Dendritic cell treated with granulocyte-macrophage colony-stimulating factor and Interleukin-4, amounts not matched to agents 40 ng/mL and 50 ng/mL, for 4 days (primary cell): ENCODE measurements at regions of chr10 and their contacts with region 1.

Region 1: GRCh38 chr10:90462749-90463470 is 394.9 kb downstream of the HTR7 start:
- H3K4me3 Mint-ChIP-seq: no peak overlapping the region
- H3K27ac Mint-ChIP-seq: no peak overlapping the region
- H3K4me1 Mint-ChIP-seq: no peaks in the 10 kb centered on the region
- H3K27me3 Mint-ChIP-seq: no peaks in the 10 kb centered on the region

Region 2: DNA sequence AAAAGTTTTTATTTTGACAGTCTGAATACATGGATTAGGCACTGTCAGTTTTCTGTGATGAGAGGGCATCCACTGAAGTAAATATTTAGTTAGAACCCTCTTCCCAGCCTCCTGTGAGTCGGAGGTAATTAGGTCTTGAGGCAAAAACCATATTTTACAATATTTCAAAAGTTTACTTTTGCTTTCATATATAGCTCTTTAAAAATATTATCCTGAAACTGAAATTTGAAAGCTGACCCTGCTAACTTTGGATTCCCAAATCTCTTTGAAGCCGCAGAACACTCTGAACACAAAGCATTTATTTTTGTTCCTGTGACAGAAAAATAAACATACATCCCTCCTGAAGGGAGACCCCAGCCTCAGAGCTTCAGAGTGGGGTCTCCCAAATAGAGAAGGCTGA is 444.1 kb before region 1 on chr10:
- intact Hi-C with region 1: loop called (anchors 5 kb)
- H3K4me3 Mint-ChIP-seq: no peak overlapping the region
- H3K27ac Mint-ChIP-seq: no peak overlapping the region
- H3K4me1 Mint-ChIP-seq: no peaks in the 10 kb centered on the region
- H3K27me3 Mint-ChIP-seq: no peaks in the 10 kb centered on the region

Region 3: DNA sequence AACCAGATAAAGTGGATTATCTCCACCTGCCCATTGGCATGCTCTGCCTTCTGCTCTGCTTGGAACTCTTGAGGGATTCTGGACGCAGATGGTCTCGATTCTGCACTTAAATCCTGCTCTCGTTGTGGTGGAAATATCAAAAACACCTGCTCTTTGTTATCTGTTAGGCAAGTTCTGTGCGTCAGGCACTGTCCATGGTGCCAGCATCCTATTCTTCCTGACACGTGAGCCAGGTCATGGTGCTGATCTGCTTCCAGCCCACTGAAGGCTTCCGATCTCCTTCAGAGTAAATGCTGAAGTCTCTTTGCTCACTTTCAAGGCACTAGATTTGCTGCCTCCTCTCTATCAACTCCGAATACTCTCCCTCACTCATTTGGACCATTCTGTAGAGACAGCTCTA is 110.6 kb before region 1 on chr10:
- intact Hi-C with region 1: no loop called
- H3K4me3 Mint-ChIP-seq: no peak overlapping the region
- H3K27ac Mint-ChIP-seq: no peak overlapping the region
- H3K4me1 Mint-ChIP-seq: no peaks in the 10 kb centered on the region
- H3K27me3 Mint-ChIP-seq: no peaks in the 10 kb centered on the region